Caco-2 (cell line): ENCODE measurements at regions of chr6 and their contacts with region 1.

Region 1: DNA sequence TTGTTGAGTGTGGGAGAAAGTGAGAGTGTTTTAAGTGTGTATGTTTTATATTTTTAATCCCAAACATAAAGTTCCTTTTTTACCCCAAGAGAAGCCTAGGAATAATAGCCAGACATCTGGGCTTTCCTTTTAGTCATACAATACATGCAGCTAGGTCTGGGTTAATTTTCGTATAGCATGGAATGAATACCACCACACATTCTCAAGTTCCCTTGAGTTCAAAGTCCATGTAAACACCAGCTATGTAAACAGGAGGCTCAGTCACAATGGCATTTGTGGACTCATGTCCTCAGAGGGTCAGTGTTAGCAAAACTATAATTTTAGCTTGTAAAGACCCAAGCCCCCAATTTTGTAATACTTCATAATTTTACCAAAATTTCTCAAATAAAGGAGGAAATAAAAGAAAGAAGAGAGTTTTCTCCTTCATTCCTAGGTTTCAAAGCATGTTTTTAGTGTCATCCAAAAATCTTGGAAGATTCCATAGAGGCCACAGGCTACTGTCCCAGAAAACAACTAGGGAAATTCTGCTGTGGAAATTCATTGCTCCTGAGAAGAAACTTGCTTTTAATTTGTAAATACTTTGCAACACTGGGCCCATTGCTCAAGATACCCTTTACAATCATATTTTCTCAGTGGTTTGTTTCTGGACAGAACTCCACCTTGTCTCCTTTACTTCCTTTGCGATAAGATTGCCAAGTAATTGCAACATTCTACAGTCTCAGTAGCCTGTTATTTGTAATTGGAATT is 671.2 kb downstream of the COL12A1 start:
- DNase-seq: peak; percentile 71 to 75
- H3K4me3 ChIP-seq: no peak overlapping the region
- H3K4me3 Mint-ChIP-seq: peak overlapping the region; percentile 50
- H3K27ac Mint-ChIP-seq: peak overlapping the region; percentile 90
- H3K4me1 ChIP-seq: peaks cover 27% of the 10 kb centered on the region
- H3K4me1 Mint-ChIP-seq: no peaks in the 10 kb centered on the region
- H3K27me3 ChIP-seq: no peaks in the 10 kb centered on the region
- H3K27me3 Mint-ChIP-seq: no peaks in the 10 kb centered on the region
- CTCF ChIP-seq: no peak

Region 2: GRCh38 chr6:74409447-74409846 is 125.2 kb before region 1 on chr6:
- CTCF ChIA-PET with region 1: no interaction called
- POLR2A ChIA-PET with region 1: no interaction called
- intact Hi-C with region 1: loop called (anchors 1 kb)
- DNase-seq: peak in 1 of 2 experiments; percentile 24
- H3K4me3 ChIP-seq: no peak overlapping the region
- H3K4me3 Mint-ChIP-seq: no peak overlapping the region
- H3K27ac Mint-ChIP-seq: no peak overlapping the region
- H3K4me1 ChIP-seq: peaks cover 16% of the 10 kb centered on the region
- H3K4me1 Mint-ChIP-seq: peaks cover 9% of the 10 kb centered on the region
- H3K27me3 ChIP-seq: no peaks in the 10 kb centered on the region
- H3K27me3 Mint-ChIP-seq: no peaks in the 10 kb centered on the region
- CTCF ChIP-seq: peak; percentile 42 to 46

Region 3: GRCh38 chr6:74420221-74420620 is 114.4 kb before region 1 on chr6:
- CTCF ChIA-PET with region 1: no interaction called
- POLR2A ChIA-PET with region 1: no interaction called
- intact Hi-C with region 1: loop called (anchors 1 kb)
- DNase-seq: peak; percentile 57 to 71
- H3K4me3 ChIP-seq: no peak overlapping the region
- H3K4me3 Mint-ChIP-seq: no peak overlapping the region
- H3K27ac Mint-ChIP-seq: peak overlapping the region; percentile 88
- H3K4me1 ChIP-seq: peaks cover 14% of the 10 kb centered on the region
- H3K4me1 Mint-ChIP-seq: no peaks in the 10 kb centered on the region
- H3K27me3 ChIP-seq: no peaks in the 10 kb centered on the region
- H3K27me3 Mint-ChIP-seq: no peaks in the 10 kb centered on the region
- CTCF ChIP-seq: no peak

Region 4: GRCh38 chr6:74458582-74458981 is 76.1 kb before region 1 on chr6:
- CTCF ChIA-PET with region 1: no interaction called
- POLR2A ChIA-PET with region 1: no interaction called
- intact Hi-C with region 1: loop called (anchors 1 kb)
- DNase-seq: peak in 1 of 2 experiments; percentile 14
- H3K4me3 ChIP-seq: no peak overlapping the region
- H3K4me3 Mint-ChIP-seq: no peak overlapping the region
- H3K27ac Mint-ChIP-seq: no peak overlapping the region
- H3K4me1 ChIP-seq: peaks cover 20% of the 10 kb centered on the region
- H3K4me1 Mint-ChIP-seq: peaks cover 22% of the 10 kb centered on the region
- H3K27me3 ChIP-seq: no peaks in the 10 kb centered on the region
- H3K27me3 Mint-ChIP-seq: no peaks in the 10 kb centered on the region
- CTCF ChIP-seq: no peak

Region 5: DNA sequence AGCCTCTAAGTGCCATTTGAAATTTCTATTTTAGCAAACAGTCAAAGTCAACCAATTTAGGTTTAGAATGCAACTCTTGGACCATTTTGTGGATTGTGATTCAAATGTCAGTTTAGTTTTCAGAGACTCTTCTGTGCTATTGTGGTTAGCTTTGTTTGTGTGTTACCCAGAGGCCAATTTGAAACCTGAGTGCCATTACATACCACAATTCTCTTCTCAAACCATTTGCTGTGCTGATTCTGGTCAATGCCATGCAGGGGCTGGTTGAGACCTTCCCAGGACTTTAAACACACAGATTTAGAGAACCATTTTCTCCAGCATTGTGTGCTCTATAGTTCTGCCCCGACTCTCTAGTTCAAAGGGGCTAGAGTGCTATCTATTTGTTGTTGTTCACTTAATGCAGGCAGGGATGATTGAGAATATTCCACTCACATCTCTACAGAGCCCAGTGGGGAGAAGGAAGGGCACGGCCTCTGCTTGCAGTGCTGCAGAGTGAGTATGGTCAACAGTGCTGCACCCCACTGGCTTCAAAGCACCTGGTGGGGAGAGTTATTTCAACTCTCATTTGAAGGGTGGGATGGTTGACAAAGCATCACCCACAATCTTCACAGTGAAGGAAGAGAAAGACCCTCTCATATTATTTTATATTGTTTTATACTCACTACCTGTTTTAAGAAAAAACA is 67.0 kb before region 1 on chr6:
- CTCF ChIA-PET with region 1: no interaction called
- POLR2A ChIA-PET with region 1: no interaction called
- intact Hi-C with region 1: loop called (anchors 1 kb)
- DNase-seq: no peak
- H3K4me3 ChIP-seq: no peak overlapping the region
- H3K4me3 Mint-ChIP-seq: no peak overlapping the region
- H3K27ac Mint-ChIP-seq: no peak overlapping the region
- H3K4me1 ChIP-seq: peaks cover 14% of the 10 kb centered on the region
- H3K4me1 Mint-ChIP-seq: peaks cover 5% of the 10 kb centered on the region
- H3K27me3 ChIP-seq: no peaks in the 10 kb centered on the region
- H3K27me3 Mint-ChIP-seq: no peaks in the 10 kb centered on the region
- CTCF ChIP-seq: no peak

Region 6: GRCh38 chr6:74519163-74519562 is 15.5 kb before region 1 on chr6:
- CTCF ChIA-PET with region 1: no interaction called
- POLR2A ChIA-PET with region 1: no interaction called
- intact Hi-C with region 1: loop called (anchors 1 kb)
- DNase-seq: no peak
- H3K4me3 ChIP-seq: no peak overlapping the region
- H3K4me3 Mint-ChIP-seq: no peak overlapping the region
- H3K27ac Mint-ChIP-seq: no peak overlapping the region
- H3K4me1 ChIP-seq: no peaks in the 10 kb centered on the region
- H3K4me1 Mint-ChIP-seq: peaks cover 7% of the 10 kb centered on the region
- H3K27me3 ChIP-seq: no peaks in the 10 kb centered on the region
- H3K27me3 Mint-ChIP-seq: no peaks in the 10 kb centered on the region
- CTCF ChIP-seq: no peak

Region 7: GRCh38 chr6:74574794-74575193 is 40.2 kb after region 1 on chr6:
- CTCF ChIA-PET with region 1: no interaction called
- POLR2A ChIA-PET with region 1: no interaction called
- intact Hi-C with region 1: loop called (anchors 1 kb)
- DNase-seq: peak in 1 of 2 experiments; percentile 31
- H3K4me3 ChIP-seq: no peak overlapping the region
- H3K4me3 Mint-ChIP-seq: no peak overlapping the region
- H3K27ac Mint-ChIP-seq: no peak overlapping the region
- H3K4me1 ChIP-seq: no peaks in the 10 kb centered on the region
- H3K4me1 Mint-ChIP-seq: no peaks in the 10 kb centered on the region
- H3K27me3 ChIP-seq: no peaks in the 10 kb centered on the region
- H3K27me3 Mint-ChIP-seq: no peaks in the 10 kb centered on the region
- CTCF ChIP-seq: peak; percentile 62 to 70